ENCODE measurements at regions of chr15 and their contacts with region 1.

Region 1: DNA sequence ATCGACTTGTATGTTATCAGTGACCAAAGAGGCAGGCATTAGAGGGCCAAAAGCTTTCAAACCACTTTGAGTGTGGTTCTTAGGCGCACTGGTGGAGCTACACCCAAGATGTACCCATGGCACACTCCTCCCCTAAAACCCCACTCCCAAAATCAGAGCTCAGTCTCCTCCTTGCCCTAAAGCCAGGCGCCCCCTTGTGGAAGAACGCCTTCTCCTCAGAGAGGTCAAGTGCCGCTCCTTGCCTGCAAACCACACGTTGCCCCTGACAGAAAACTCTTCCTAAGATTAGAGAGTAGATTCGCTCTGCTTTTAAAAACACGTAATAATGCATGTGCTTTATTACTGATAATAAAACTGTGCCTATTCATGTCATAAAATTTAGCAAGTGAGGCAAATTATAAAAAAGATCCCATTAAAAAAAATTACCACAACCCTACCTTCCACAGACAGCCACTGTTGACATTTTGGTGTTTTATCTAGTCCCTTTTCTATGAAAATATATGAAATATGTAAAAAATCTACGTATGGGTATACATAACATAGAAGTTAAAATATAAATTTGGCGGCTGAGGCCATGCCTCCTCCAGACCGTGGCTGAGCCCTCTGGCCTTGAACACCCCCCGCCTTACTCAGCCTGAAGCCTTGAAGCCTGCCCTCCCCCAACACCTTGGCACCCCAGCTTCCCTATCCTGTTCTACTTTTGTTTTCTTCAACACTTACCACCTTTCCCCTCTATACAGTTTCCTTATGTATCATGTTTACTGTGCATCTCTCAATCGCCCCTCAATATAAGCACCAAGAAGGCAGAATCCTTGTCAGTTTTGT is 33.5 kb downstream of the BCL2L10 start:
- DNase-seq: peak; percentile 92
- H3K4me3 Mint-ChIP-seq: peak overlapping the region; percentile 58
- H3K27ac Mint-ChIP-seq: peak overlapping the region; percentile 96
- H3K4me1 Mint-ChIP-seq: peaks cover 45% of the 10 kb centered on the region
- H3K27me3 Mint-ChIP-seq: no peaks in the 10 kb centered on the region
- CTCF ChIP-seq: peak; percentile 85

Region 2: GRCh38 chr15:51971375-51972133 is 107.5 kb before region 1 on chr15 and contains the start of gene LEO1:
- CTCF ChIA-PET with region 1: interaction called, 4 read pairs
- POLR2A ChIA-PET with region 1: interaction called, 62 read pairs
- intact Hi-C with region 1: loop called (anchors 1 kb)
- DNase-seq: peak; percentile 95
- H3K4me3 Mint-ChIP-seq: peak within 1 kb of the TSS; percentile 97
- H3K27ac Mint-ChIP-seq: peak within 1 kb of the TSS; percentile 94
- H3K4me1 Mint-ChIP-seq: peaks cover 12% of the 10 kb centered on the region
- H3K27me3 Mint-ChIP-seq: no peaks in the 10 kb centered on the region
- CTCF ChIP-seq: peak; percentile 31
- total RNA-seq, gene LEO1: 24.2 and 29.3 TPM in 2 replicates

Region 3: DNA sequence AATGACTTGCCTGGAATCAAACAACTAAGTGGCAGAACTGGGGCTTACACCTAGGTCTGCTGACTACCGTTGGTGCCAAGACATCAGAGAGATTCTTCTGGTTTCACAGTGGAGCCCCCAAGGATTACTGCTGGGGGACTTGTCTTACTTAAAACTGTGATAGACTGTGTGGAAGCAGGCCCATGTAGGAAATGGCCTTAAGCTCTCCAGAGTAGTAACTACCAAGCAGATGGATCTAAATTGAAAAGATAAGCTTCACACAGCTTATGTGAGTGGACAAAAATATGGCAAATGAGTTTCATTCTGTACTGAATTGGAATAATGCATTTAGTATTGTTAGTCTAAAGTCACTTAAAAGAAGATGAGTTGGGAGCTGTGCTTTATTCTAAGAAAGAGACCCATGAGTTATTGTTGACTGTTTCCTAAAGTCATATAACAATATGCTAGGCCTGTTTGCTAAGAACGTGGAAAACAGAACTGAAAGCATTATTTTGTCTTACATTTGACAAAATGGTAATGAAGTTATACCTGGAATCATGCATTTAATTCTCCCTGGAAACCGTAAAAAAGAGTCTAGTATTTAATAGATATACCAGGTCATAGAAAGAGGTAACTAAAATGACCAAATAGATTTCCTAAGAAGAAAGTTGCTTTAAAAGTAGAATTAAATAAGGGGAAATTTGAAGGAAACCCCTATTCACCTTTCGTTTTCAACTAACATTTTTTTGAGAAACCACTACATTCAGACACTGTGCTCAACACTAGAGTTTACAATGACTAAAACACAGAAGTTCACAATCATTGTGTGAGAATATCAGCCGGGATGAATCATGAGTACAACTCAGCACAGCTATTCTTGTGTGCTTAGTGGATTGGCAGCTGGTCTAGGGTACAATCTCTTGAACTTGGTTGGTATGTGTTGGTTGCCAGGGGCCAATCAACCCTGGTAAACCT is 73.1 kb before region 1 on chr15:
- CTCF ChIA-PET with region 1: interaction called, 6 read pairs
- POLR2A ChIA-PET with region 1: interaction called, 14 read pairs
- intact Hi-C with region 1: no loop called
- DNase-seq: peak; percentile 48
- H3K4me3 Mint-ChIP-seq: no peak overlapping the region
- H3K27ac Mint-ChIP-seq: peak overlapping the region; percentile 19
- H3K4me1 Mint-ChIP-seq: peaks cover 19% of the 10 kb centered on the region
- H3K27me3 Mint-ChIP-seq: no peaks in the 10 kb centered on the region
- CTCF ChIP-seq: no peak

Region 4: GRCh38 chr15:52050416-52050815 is 28.7 kb before region 1 on chr15:
- CTCF ChIA-PET with region 1: interaction called, 4 read pairs
- POLR2A ChIA-PET with region 1: interaction called, 17 read pairs
- intact Hi-C with region 1: no loop called
- DNase-seq: peak; percentile 28
- H3K4me3 Mint-ChIP-seq: no peak overlapping the region
- H3K27ac Mint-ChIP-seq: no peak overlapping the region
- H3K4me1 Mint-ChIP-seq: peaks cover 5% of the 10 kb centered on the region
- H3K27me3 Mint-ChIP-seq: no peaks in the 10 kb centered on the region
- CTCF ChIP-seq: no peak

Region 5: GRCh38 chr15:52103217-52104207 is 24.4 kb after region 1 on chr15:
- CTCF ChIA-PET with region 1: interaction called, 5 read pairs
- POLR2A ChIA-PET with region 1: interaction called, 214 read pairs
- intact Hi-C with region 1: no loop called
- DNase-seq: peak; percentile 95
- H3K4me3 Mint-ChIP-seq: peak overlapping the region; percentile 20
- H3K27ac Mint-ChIP-seq: peak overlapping the region; percentile 92
- H3K4me1 Mint-ChIP-seq: peaks cover 36% of the 10 kb centered on the region
- H3K27me3 Mint-ChIP-seq: no peaks in the 10 kb centered on the region
- CTCF ChIP-seq: no peak

Region 6: GRCh38 chr15:52337198-52337853 is 258.2 kb after region 1 on chr15:
- CTCF ChIA-PET with region 1: no interaction called
- POLR2A ChIA-PET with region 1: no interaction called
- intact Hi-C with region 1: no loop called
- DNase-seq: peak; percentile 40
- H3K4me3 Mint-ChIP-seq: no peak overlapping the region
- H3K27ac Mint-ChIP-seq: no peak overlapping the region
- H3K4me1 Mint-ChIP-seq: peaks cover 19% of the 10 kb centered on the region
- H3K27me3 Mint-ChIP-seq: no peaks in the 10 kb centered on the region
- CTCF ChIP-seq: no peak